ENCODE measurements at regions of chr17 and their contacts with region 1.

Region 1: GRCh38 chr17:7740481-7741001 is 23.0 kb downstream of the DNAH2 start:
- DNase-seq: no peak
- ATAC-seq: no peak
- H3K4me3 ChIP-seq: no peak overlapping the region
- H3K27ac ChIP-seq: no peak overlapping the region
- H3K4me1 ChIP-seq: peaks cover 0 to 4% of the 10 kb centered on the region in 2 experiments; a peak in 3 of 5 replicates
- H3K27me3 ChIP-seq: peaks cover 18 to 48% of the 10 kb centered on the region in 2 experiments; a peak in 4 of 5 replicates
- CTCF ChIP-seq: no peak
- EP300 ChIP-seq: no peak
- POLR2A ChIP-seq: no peak
- RAD21 ChIP-seq: no peak

Region 2: GRCh38 chr17:7436351-7437206 is 304.0 kb before region 1 on chr17:
- CTCF ChIA-PET with region 1: no interaction called
- POLR2A ChIA-PET with region 1: no interaction called
- in situ Hi-C with region 1: no loop called
- intact Hi-C with region 1: no loop called
- DNase-seq: no peak
- ATAC-seq: no peak
- H3K4me3 ChIP-seq: peak overlapping the region; percentile 64
- H3K27ac ChIP-seq: peak overlapping the region; percentile 75
- H3K4me1 ChIP-seq: peaks cover 17 to 60% of the 10 kb centered on the region in 2 experiments; a peak in 4 of 5 replicates
- H3K27me3 ChIP-seq: no peaks in the 10 kb centered on the region
- CTCF ChIP-seq: no peak
- EP300 ChIP-seq: no peak
- POLR2A ChIP-seq: no peak
- RAD21 ChIP-seq: no peak

Region 3: GRCh38 chr17:7825206-7825990 is 84.9 kb after region 1 on chr17:
- CTCF ChIA-PET with region 1: interaction called, 3 read pairs
- POLR2A ChIA-PET with region 1: no interaction called
- in situ Hi-C with region 1: no loop called
- intact Hi-C with region 1: loop called (anchors 1 kb)
- DNase-seq: peak in 1 of 4 experiments; percentile 29
- ATAC-seq: 0 out of 3 replicates have a peak, but pooled peaks have one; percentile 47
- H3K4me3 ChIP-seq: no peak overlapping the region
- H3K27ac ChIP-seq: no peak overlapping the region
- H3K4me1 ChIP-seq: peaks cover 0 to 9% of the 10 kb centered on the region in 2 experiments; a peak in 2 of 5 replicates
- H3K27me3 ChIP-seq: peaks cover 9 to 32% of the 10 kb centered on the region in 2 experiments; a peak in 4 of 5 replicates
- CTCF ChIP-seq: peak; percentile 16 to 42 (median 35); a peak in 3 of 6 replicates
- EP300 ChIP-seq: no peak
- POLR2A ChIP-seq: no peak
- RAD21 ChIP-seq: no peak

Region 4: GRCh38 chr17:7897773-7898172 is 157.2 kb after region 1 on chr17:
- CTCF ChIA-PET with region 1: interaction called, 5 read pairs
- POLR2A ChIA-PET with region 1: no interaction called
- in situ Hi-C with region 1: no loop called
- intact Hi-C with region 1: loop called (anchors 5 kb)
- DNase-seq: peak in 3 of 4 experiments; percentile 23 to 34 (median 33)
- ATAC-seq: peak; percentile 78
- H3K4me3 ChIP-seq: no peak overlapping the region
- H3K27ac ChIP-seq: no peak overlapping the region
- H3K4me1 ChIP-seq: no peaks in the 10 kb centered on the region
- H3K27me3 ChIP-seq: no peaks in the 10 kb centered on the region
- CTCF ChIP-seq: peak; percentile 53 to 73 (median 54); a peak in 5 of 6 replicates
- EP300 ChIP-seq: no peak
- POLR2A ChIP-seq: no peak
- RAD21 ChIP-seq: peak; percentile 84 to 88

Region 5: DNA sequence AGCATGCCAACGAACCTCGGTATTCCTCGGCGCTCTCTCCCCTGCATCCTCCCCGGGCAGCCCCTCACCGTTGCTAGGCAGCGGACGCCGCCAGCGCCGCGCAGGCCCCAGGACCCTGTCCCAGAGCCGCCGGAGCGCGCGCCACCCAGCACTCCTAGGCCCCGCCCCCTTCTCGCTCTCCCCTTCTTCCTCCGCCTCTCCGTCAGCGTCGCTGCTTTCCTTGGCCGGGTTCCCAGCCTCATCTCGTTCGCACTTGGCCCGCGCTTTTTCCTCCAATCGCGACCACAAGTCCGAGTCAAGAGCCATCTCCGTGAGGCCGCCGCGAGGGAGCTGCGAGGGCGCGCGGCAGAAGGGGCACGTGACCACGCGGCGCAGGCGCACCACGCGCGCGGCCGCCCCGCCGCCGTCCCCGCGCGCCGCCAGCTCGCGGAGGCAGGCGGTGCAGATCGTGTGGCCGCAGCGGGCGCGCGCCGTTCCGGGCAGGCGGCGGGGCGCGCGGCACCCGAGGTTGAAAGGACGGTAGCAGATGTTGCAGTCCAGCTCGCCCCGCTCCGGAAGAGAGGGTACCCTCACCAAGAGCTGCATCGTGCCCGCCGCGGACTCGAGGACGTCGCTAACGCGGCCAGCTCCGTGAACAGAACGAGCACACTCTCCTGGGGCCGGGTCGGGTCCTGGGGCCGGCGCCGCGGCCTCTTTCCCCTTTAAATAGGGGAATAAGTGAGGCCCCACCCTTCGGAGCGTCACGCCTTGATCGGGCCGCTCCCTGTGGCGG is 175.3 kb after region 1 on chr17 and contains the start of gene RNF227:
- CTCF ChIA-PET with region 1: no interaction called
- POLR2A ChIA-PET with region 1: no interaction called
- in situ Hi-C with region 1: no loop called
- intact Hi-C with region 1: loop called (anchors 1 kb)
- DNase-seq: peak; percentile 72 to 92 (median 74)
- ATAC-seq: peak; percentile 87
- H3K4me3 ChIP-seq: peak within 1 kb of the TSS; percentile 46
- H3K27ac ChIP-seq: peak within 1 kb of the TSS; percentile 88
- H3K4me1 ChIP-seq: peaks cover 18 to 24% of the 10 kb centered on the region in 2 experiments; a peak in 4 of 5 replicates
- H3K27me3 ChIP-seq: no peaks in the 10 kb centered on the region
- CTCF ChIP-seq: no peak
- EP300 ChIP-seq: no peak
- POLR2A ChIP-seq: peak; percentile 70
- RAD21 ChIP-seq: no peak
- polyA plus RNA-seq, gene RNF227: 1.1 to 1.5 TPM

Measured in K562 (cell line).